Dorsolateral prefrontal cortex (tissue), 120 donors: ENCODE measurements at regions of chr9 and their contacts with region 1.

Region 1: GRCh38 chr9:128339771-128340690 is at the start of gene SLC27A4:
- DNase-seq: peak; percentile 35 to 85 (median 67)
- H3K4me3 ChIP-seq: peak within 1 kb of the TSS; percentile 70 to 97 (median 87)
- H3K27ac ChIP-seq: peak within 1 kb of the TSS in 50 of 59 donors; percentile 28 to 87 (median 68)
- H3K27me3 ChIP-seq: no peaks in the 10 kb centered on the region
- CTCF ChIP-seq: peak in 13 of 56 donors; percentile 10 to 44 (median 14)
- total RNA-seq, gene SLC27A4: 25.1 to 59.1 (median 46.4) TPM

Region 2: DNA sequence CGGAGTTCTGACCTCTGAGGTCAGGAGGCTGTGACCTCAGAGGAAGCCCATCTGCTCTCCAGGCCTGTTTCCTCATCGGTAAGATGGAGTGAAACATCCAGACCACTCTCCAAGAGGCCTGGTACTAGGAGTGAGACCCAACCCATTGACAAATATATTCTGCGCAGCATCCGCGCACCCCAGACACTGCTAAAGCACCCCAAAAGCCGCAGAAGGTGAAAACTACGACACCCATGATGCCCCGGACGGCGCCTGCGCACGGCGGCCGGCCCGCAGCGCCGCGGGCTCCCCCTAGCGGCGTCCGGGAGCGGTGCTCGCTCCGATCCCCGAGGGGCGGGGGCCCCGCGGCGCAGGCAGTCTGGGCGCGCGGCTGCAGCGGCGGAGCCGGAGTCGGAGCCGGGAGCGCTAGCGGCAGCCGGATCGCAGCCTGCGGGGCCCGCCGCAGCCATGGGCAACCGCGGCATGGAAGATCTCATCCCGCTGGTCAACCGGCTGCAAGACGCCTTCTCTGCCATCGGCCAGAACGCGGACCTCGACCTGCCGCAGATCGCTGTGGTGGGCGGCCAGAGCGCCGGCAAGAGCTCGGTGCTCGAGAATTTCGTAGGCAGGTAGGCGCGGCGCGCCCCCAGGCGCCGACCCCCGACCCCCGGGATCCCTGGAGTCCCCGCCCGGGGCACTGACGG is 136.9 kb before region 1 on chr9 and contains the start of gene DNM1:
- intact Hi-C with region 1: loop called in 1 of 2 experiments (anchors 5 kb)
- DNase-seq: peak in 6 of 10 donors; percentile 47 to 85 (median 62)
- H3K4me3 ChIP-seq: peak within 1 kb of the TSS; percentile 43 to 87 (median 76)
- H3K27ac ChIP-seq: peak within 1 kb of the TSS in 57 of 59 donors; percentile 30 to 97 (median 84)
- H3K27me3 ChIP-seq: peaks cover 0 to 5% (median 0%) of the 10 kb centered on the region in 45 donors
- CTCF ChIP-seq: peak in 55 of 56 donors; percentile 51 to 99 (median 84)
- total RNA-seq, gene DNM1: 213 to 1,033 (median 740) TPM

Region 3: DNA sequence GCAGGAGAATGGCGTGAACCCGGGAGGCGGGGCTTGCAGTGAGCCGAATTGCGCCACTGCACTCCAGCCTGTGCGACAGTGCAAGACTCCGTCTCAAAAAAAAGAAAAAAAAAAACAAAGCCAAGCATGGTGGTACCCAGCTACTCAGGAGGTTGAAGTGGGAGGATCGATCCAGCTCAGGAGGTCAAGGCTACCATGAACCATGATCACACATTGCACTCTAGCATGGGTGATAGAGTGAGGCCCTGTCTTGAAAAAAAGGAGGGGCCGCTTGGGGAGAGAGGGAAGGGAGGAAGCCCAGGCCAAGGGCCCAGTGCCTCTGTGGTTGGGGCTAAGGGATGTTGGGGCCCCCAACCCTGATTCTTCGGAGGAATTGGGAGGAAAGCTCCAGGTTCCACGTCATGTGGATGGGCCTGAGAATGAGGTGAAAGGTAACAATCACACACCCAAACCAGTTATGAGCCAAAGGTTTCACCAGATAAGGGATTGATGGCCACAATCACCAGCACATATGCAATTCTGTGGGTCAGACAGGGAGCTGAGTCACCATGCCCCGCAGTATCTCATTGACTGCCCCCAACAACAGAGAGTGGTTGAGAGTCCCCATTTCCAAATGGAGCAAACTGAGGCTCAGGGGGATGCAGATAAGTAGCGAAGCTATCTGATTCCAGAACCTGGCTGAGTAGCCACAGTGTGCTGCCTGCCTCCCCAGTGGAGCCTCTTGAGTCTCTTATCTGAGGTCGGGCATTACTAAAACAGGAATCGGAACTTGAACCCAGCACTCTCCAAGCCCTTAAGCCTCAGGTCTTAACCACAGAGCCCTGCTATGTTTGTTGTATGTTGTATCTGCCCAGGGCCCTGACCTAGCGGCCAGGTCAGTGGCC is 43.5 kb before region 1 on chr9:
- intact Hi-C with region 1: loop called (anchors 2 to 5 kb)
- DNase-seq: no peak
- H3K4me3 ChIP-seq: no peak overlapping the region
- H3K27ac ChIP-seq: peak overlapping the region in 4 of 59 donors; percentile 3 to 76 (median 33)
- H3K27me3 ChIP-seq: no peaks in the 10 kb centered on the region
- CTCF ChIP-seq: no peak

Region 4: GRCh38 chr9:128322404-128323211 is 17.4 kb before region 1 on chr9 and contains the starts of genes COQ4 and TRUB2:
- intact Hi-C with region 1: loop called (anchors 2 kb)
- DNase-seq: peak; percentile 89 to 96 (median 94)
- H3K4me3 ChIP-seq: peak within 1 kb of the TSS; percentile 68 to 100 (median 95)
- H3K27ac ChIP-seq: peak within 1 kb of the TSS; percentile 81 to 100 (median 98)
- H3K27me3 ChIP-seq: no peaks in the 10 kb centered on the region
- CTCF ChIP-seq: peak in 28 of 56 donors; percentile 2 to 57 (median 22)
- total RNA-seq, gene COQ4: 28.0 to 67.5 (median 47.0) TPM
- total RNA-seq, gene TRUB2: 20.6 to 66.5 (median 44.9) TPM

Region 5: GRCh38 chr9:128372188-128372641 is 32.2 kb after region 1 on chr9:
- intact Hi-C with region 1: no loop called
- DNase-seq: peak in 6 of 10 donors; percentile 48 to 92 (median 78)
- H3K4me3 ChIP-seq: peak overlapping the region; percentile 59 to 98 (median 89)
- H3K27ac ChIP-seq: peak overlapping the region in 58 of 59 donors; percentile 58 to 100 (median 97)
- H3K27me3 ChIP-seq: no peaks in the 10 kb centered on the region
- CTCF ChIP-seq: no peak